ENCODE measurements at regions of chr5 and their contacts with region 1.

Region 1: DNA sequence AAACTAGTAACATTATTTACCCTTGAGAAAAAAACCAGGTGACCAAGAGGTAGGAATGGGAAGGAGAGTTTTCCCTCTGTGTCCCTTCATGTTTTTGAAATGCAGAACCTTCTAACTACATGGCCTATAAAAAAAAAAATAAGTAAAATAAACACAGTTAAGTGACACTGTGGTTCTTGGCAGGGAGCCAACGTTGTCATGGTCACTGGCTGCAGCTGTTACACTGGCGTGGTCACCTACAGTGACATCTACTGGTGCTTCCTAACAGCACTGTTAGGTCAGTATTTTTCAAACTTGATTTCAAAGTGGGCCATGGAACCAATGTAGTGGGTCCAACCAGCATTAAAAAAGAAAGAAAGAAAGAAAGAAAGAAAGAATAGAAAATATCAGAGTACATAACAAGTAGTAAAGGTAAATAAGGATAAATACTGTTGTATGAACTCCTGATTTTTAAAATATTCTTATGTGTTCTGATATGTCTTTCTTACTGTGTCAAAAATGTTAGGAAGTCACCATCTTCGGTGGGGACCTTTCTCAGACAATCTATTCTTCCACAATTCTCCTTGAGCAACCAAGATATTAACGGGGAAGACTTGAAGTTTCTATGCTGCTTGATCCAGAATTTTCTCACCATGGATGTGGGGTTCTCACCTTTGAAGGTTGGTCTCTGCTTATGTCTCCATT is 59.1 kb upstream of the PJA2 start:
- H3K4me3 Mint-ChIP-seq: no peak overlapping the region
- H3K27ac Mint-ChIP-seq: no peak overlapping the region
- H3K4me1 Mint-ChIP-seq: peaks cover 5% of the 10 kb centered on the region
- H3K27me3 Mint-ChIP-seq: no peaks in the 10 kb centered on the region

Region 2: GRCh38 chr5:108642167-108642906 is 826.5 kb before region 1 on chr5:
- intact Hi-C with region 1: loop called (anchors 2 kb)
- H3K4me3 Mint-ChIP-seq: peak overlapping the region; percentile 25
- H3K27ac Mint-ChIP-seq: peak overlapping the region; percentile 48
- H3K4me1 Mint-ChIP-seq: peaks cover 9% of the 10 kb centered on the region
- H3K27me3 Mint-ChIP-seq: no peaks in the 10 kb centered on the region

Region 3: DNA sequence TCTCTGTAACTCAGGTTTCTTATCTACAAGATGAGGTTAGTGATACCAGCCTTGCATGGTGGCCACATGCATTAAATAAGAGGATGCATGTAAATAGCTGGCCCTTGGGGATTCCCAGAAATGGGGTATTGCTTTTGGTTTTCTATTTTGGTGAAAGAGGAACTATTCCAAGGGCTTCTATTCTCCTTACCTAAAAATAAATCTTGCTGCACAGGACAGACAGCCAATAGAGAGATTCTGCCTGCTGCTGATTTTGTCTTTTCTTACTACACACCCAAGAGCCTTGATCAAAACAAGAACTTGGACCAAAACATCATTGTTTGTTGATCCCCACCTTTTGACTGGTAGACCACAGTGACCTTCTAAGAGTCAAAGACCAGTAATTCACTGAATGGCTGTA is 220.9 kb before region 1 on chr5:
- intact Hi-C with region 1: no loop called
- H3K4me3 Mint-ChIP-seq: no peak overlapping the region
- H3K27ac Mint-ChIP-seq: no peak overlapping the region
- H3K4me1 Mint-ChIP-seq: peaks cover 6% of the 10 kb centered on the region
- H3K27me3 Mint-ChIP-seq: no peaks in the 10 kb centered on the region

Region 4: DNA sequence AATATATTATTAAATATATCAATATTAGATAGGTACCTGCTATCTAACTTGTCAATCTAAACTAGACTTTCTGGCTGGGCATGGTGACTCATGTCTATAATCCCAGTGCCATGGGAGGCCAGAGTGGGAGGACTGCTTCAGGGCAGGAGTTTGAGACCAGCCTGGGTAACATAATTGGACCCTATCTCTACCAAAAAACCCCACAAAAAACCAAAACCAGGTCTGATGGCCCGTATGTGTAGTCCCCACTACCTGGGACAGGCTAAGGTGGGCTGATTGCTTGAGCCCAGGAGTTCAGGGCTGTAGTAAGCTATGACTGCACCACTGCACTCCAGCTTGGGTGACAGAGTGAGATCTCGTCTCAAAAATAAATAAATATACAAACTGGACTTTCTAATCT is 114.1 kb before region 1 on chr5:
- intact Hi-C with region 1: no loop called
- H3K4me3 Mint-ChIP-seq: no peak overlapping the region
- H3K27ac Mint-ChIP-seq: no peak overlapping the region
- H3K4me1 Mint-ChIP-seq: no peaks in the 10 kb centered on the region
- H3K27me3 Mint-ChIP-seq: no peaks in the 10 kb centered on the region

Region 5: GRCh38 chr5:109421956-109422355 is 46.9 kb before region 1 on chr5:
- intact Hi-C with region 1: no loop called
- H3K4me3 Mint-ChIP-seq: no peak overlapping the region
- H3K27ac Mint-ChIP-seq: no peak overlapping the region
- H3K4me1 Mint-ChIP-seq: peaks cover 10% of the 10 kb centered on the region
- H3K27me3 Mint-ChIP-seq: no peaks in the 10 kb centered on the region